CD8-positive, alpha-beta T cell (primary cell): ENCODE measurements at regions of chr22 and their contacts with region 1.

Region 1: GRCh38 chr22:30423982-30424963 is 1.3 kb upstream of the MTFP1 start:
- DNase-seq: peak; percentile 94 to 100 (median 98)
- ATAC-seq: peak; percentile 76
- H3K4me3 ChIP-seq: peak overlapping the region; percentile 64 to 69
- H3K4me3 Mint-ChIP-seq: peak overlapping the region; percentile 93
- H3K27ac ChIP-seq: peak overlapping the region; percentile 89 to 91
- H3K27ac Mint-ChIP-seq: peak overlapping the region; percentile 97
- H3K4me1 ChIP-seq: peaks cover 41% of the 10 kb centered on the region
- H3K4me1 Mint-ChIP-seq: peaks cover 63% of the 10 kb centered on the region
- H3K27me3 ChIP-seq: no peaks in the 10 kb centered on the region
- H3K27me3 Mint-ChIP-seq: no peaks in the 10 kb centered on the region
- CTCF ChIP-seq: no peak

Region 2: DNA sequence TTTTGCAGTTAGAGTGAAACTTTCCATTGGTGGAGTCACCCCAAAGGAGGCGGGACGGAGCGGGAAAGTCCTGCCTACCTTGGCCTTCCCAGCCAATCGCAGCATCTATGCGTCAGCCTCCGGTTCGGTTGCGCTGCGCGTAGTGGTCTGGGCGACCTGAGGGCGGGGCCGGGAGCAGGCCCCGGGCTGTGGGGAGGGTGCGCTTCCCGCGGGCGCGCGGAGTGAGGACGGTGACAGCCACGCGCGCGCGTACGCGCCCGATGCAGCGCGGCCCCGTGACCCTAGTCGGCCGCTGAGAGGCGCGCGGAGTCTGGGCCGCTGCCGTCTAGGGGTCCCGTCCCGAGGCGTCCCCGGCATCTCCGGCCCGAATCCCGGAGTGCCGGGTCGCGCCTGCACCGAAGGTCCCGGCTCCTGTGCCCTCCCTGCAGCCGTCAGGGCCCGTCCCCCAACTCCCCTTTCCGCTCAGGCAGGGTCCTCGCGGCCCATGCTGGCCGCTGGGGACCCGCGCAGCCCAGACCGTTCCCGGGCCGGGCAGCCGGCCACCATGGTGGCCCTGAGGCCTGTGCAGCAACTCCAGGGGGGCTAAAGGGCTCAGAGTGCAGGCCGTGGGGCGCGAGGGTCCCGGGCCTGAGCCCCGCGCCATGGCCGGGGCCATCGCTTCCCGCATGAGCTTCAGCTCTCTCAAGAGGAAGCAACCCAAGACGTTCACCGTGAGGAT is 820.8 kb before region 1 on chr22 and contains the start of gene NF2:
- CTCF ChIA-PET with region 1: no interaction called
- POLR2A ChIA-PET with region 1: no interaction called
- intact Hi-C with region 1: loop called in 1 of 2 experiments (anchors 5 kb)
- DNase-seq: peak; percentile 96 to 100 (median 98)
- ATAC-seq: peak; percentile 98
- H3K4me3 ChIP-seq: peak within 1 kb of the TSS; percentile 77 to 86
- H3K4me3 Mint-ChIP-seq: peak within 1 kb of the TSS; percentile 93
- H3K27ac ChIP-seq: peak within 1 kb of the TSS; percentile 84 to 90
- H3K27ac Mint-ChIP-seq: peak within 1 kb of the TSS; percentile 97
- H3K4me1 ChIP-seq: peaks cover 18% of the 10 kb centered on the region
- H3K4me1 Mint-ChIP-seq: peaks cover 25% of the 10 kb centered on the region
- H3K27me3 ChIP-seq: no peaks in the 10 kb centered on the region
- H3K27me3 Mint-ChIP-seq: no peaks in the 10 kb centered on the region
- CTCF ChIP-seq: no peak
- total RNA-seq, gene NF2: 22.6 to 23.2 TPM

Region 3: DNA sequence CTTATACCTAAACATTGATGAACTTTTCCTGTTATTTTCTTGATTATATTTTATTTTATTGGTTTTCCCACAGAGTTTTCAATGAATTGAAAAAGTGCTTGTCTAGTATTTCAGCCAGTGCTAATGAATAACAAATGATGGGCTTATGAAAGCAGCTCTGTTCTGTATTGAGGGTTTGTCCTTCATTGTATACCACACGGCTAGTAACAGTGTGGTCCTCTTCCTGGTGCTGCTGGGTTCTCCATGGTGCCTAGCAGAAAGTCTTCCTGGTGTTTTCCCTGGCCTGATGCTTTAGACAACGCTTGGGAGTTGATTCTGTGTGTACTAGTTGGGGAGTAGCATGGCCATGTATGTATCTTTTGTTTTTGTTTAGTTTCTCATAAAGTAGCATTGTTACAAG is 452.2 kb before region 1 on chr22:
- CTCF ChIA-PET with region 1: no interaction called
- POLR2A ChIA-PET with region 1: no interaction called
- intact Hi-C with region 1: no loop called
- DNase-seq: no peak
- ATAC-seq: no peak
- H3K4me3 ChIP-seq: no peak overlapping the region
- H3K4me3 Mint-ChIP-seq: no peak overlapping the region
- H3K27ac ChIP-seq: no peak overlapping the region
- H3K27ac Mint-ChIP-seq: no peak overlapping the region
- H3K4me1 ChIP-seq: no peaks in the 10 kb centered on the region
- H3K4me1 Mint-ChIP-seq: peaks cover 18% of the 10 kb centered on the region
- H3K27me3 ChIP-seq: no peaks in the 10 kb centered on the region
- H3K27me3 Mint-ChIP-seq: no peaks in the 10 kb centered on the region
- CTCF ChIP-seq: no peak

Region 4: DNA sequence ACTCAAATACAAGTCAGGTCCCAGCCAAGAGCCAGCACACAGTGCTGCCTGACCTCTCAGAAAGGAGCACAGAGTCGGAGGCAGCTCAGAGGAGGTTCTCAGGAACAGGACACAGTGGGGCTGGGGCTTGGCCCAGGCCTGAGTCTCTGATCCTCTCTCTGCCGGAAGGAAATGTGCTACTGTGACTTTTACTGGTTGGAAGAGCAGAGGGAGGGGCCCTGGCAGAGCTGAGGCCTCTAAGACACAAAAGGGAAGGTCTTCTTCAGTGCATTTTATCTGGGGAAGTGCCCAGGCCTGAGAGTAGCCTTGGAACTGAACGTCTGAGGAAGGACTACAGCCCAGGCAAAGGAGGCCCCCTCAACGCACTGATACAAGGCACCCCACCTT is 118.8 kb before region 1 on chr22:
- CTCF ChIA-PET with region 1: interaction called, 5 read pairs
- POLR2A ChIA-PET with region 1: interaction called, 4 read pairs
- intact Hi-C with region 1: loop called in 1 of 2 experiments (anchors 5 kb)
- DNase-seq: peak in 8 of 9 experiments; percentile 43 to 80 (median 56)
- ATAC-seq: peak; percentile 50
- H3K4me3 ChIP-seq: peak overlapping the region; percentile 36 to 38
- H3K4me3 Mint-ChIP-seq: peak overlapping the region; percentile 69
- H3K27ac ChIP-seq: peak overlapping the region; percentile 62 to 77
- H3K27ac Mint-ChIP-seq: peak overlapping the region; percentile 98
- H3K4me1 ChIP-seq: peaks cover 100% of the 10 kb centered on the region
- H3K4me1 Mint-ChIP-seq: peaks cover 97% of the 10 kb centered on the region
- H3K27me3 ChIP-seq: no peaks in the 10 kb centered on the region
- H3K27me3 Mint-ChIP-seq: no peaks in the 10 kb centered on the region
- CTCF ChIP-seq: no peak

Region 5: GRCh38 chr22:30348809-30349208 is 75.5 kb before region 1 on chr22:
- CTCF ChIA-PET with region 1: no interaction called
- POLR2A ChIA-PET with region 1: no interaction called
- intact Hi-C with region 1: no loop called
- DNase-seq: no peak
- ATAC-seq: no peak
- H3K4me3 ChIP-seq: no peak overlapping the region
- H3K4me3 Mint-ChIP-seq: no peak overlapping the region
- H3K27ac ChIP-seq: no peak overlapping the region
- H3K27ac Mint-ChIP-seq: peak overlapping the region; percentile 23
- H3K4me1 ChIP-seq: peaks cover 42% of the 10 kb centered on the region
- H3K4me1 Mint-ChIP-seq: peaks cover 52% of the 10 kb centered on the region
- H3K27me3 ChIP-seq: no peaks in the 10 kb centered on the region
- H3K27me3 Mint-ChIP-seq: no peaks in the 10 kb centered on the region
- CTCF ChIP-seq: no peak

Region 6: DNA sequence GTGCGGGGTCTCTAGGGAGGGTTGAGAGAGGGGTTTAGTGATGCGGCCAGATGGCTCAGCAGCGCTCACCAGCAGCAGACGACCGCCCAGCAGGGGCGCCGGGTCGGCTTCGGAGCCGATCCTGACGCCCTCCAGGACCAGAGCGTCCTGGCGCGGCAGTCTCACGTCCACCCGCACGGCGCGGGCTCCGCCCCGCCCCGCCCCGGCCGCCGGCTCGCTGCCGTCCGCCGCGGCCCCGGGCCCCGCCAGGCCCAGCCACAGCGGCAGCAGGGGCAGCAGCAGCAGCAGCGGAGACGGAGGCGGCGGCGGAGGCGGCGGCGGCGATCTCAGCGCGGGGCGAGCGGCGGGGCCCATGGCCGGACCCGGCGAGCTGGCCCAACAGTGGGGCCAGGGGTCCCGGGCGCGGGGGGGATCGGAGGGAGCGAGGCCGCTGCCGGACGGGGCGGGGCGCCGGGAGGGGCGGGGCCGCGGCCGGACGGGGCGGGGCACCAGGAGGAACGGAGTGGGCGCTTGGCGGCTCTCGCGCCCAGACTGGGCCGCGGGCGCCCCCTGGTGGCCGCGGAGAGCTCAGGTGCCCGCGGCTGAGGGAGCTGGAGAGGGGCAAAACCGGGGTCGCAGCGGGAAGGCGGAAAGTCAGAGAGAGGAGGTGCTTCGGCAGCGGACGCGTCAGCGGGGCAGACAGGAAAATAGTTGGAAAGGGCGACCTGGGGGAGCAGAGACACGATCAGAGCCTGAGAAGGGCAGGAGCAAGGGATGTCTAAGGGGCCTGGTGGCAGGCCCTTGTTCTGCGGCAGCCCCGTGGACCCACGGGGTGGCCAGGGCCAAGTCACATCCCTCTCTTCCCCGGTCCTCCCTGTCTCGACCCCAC is 37.1 kb before region 1 on chr22 and contains the start of gene RNF215:
- CTCF ChIA-PET with region 1: interaction called, 210 read pairs
- POLR2A ChIA-PET with region 1: interaction called, 5 read pairs
- intact Hi-C with region 1: loop called (anchors 1 kb)
- DNase-seq: peak; percentile 60 to 91 (median 75)
- ATAC-seq: peak; percentile 79
- H3K4me3 ChIP-seq: peak within 1 kb of the TSS; percentile 33 to 40
- H3K4me3 Mint-ChIP-seq: peak within 1 kb of the TSS; percentile 85
- H3K27ac ChIP-seq: no peak within 1 kb of the TSS
- H3K27ac Mint-ChIP-seq: peak within 1 kb of the TSS; percentile 82
- H3K4me1 ChIP-seq: peaks cover 16% of the 10 kb centered on the region
- H3K4me1 Mint-ChIP-seq: peaks cover 26% of the 10 kb centered on the region
- H3K27me3 ChIP-seq: peaks cover 0 to 2% of the 10 kb centered on the region in 2 experiments
- H3K27me3 Mint-ChIP-seq: no peaks in the 10 kb centered on the region
- CTCF ChIP-seq: peak; percentile 87
- total RNA-seq, gene RNF215: 7.0 to 7.4 TPM

Region 7: DNA sequence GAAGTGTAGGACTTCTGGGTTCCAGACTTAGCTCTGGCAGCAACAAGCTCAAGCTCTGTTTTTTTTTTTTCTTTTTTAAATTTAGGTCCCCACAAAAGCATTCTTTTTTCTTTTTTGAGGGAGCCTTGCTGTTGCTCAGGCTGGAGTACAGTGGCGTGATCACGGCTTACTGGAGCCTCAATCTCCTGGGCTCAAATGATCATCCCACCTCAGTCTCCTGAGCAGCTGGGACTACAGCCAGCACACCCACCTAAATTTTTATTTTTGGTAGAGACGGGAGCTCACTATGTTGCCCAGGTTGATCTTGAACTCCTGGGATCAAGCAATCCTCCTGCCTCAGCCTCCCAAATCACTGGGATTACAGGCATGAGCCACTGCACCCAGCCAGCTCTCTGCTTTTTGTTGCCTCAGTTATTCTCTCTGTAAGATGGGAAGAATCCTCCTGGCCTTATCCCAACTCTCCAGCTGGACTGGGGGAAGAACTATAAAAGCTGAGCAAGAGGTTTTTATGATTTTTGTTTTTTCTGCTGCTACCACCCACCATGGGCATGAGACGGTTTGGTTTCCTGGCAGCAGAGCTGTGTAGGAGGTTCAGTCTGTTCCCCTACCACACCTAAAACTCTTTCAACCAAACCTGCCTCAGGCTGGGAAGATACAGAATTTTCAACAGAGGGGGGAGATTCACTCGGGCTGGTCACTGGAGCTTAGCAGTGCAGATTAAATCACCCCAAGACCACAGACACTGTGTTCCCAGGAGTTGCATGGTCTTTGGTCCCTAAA is 10.3 kb before region 1 on chr22:
- CTCF ChIA-PET with region 1: interaction called, 39 read pairs
- POLR2A ChIA-PET with region 1: interaction called, 44 read pairs
- intact Hi-C with region 1: loop called in 1 of 2 experiments (anchors 1 kb)
- DNase-seq: peak in 1 of 9 experiments; percentile 19
- ATAC-seq: peak; percentile 58
- H3K4me3 ChIP-seq: peak overlapping the region in 1 of 2 experiments; percentile 4
- H3K4me3 Mint-ChIP-seq: peak overlapping the region; percentile 38
- H3K27ac ChIP-seq: peak overlapping the region; percentile 9 to 36
- H3K27ac Mint-ChIP-seq: peak overlapping the region; percentile 88
- H3K4me1 ChIP-seq: peaks cover 38% of the 10 kb centered on the region
- H3K4me1 Mint-ChIP-seq: peaks cover 41% of the 10 kb centered on the region
- H3K27me3 ChIP-seq: no peaks in the 10 kb centered on the region
- H3K27me3 Mint-ChIP-seq: no peaks in the 10 kb centered on the region
- CTCF ChIP-seq: no peak

Region 8: DNA sequence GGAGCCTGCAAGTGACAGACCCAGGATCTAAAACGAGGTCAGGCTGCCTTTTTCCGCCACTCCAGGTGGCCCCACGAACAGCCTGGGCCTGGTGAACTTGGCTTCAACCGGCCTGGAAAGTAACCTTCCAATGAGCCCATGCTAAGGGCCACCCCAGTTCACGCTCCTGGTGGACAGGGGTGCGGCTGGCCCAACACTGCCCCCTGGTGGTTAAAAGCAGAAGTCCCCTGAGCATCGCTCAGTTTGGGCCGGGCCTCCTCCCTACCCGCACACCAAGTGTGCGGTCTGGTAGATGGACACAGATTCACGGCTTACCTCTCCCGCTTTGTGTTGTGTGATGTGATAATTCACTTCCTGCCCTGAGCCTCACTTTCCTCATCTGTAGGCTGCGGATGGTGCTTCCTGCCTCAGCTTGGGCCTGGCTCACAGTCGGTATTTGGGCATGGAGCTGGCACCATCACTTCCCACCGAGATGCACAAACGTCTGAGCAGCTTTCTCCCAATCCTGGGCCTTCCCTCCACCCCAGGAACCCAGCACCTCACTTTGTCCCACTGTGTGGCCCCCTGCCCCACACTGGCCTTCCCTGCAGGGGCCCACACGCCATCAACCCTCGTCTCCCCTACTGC is 61.2 kb after region 1 on chr22:
- CTCF ChIA-PET with region 1: interaction called, 10 read pairs
- POLR2A ChIA-PET with region 1: no interaction called
- intact Hi-C with region 1: loop called in 1 of 2 experiments (anchors 2 kb)
- DNase-seq: peak; percentile 60 to 85 (median 75)
- ATAC-seq: peak; percentile 98
- H3K4me3 ChIP-seq: no peak overlapping the region
- H3K4me3 Mint-ChIP-seq: no peak overlapping the region
- H3K27ac ChIP-seq: no peak overlapping the region
- H3K27ac Mint-ChIP-seq: no peak overlapping the region
- H3K4me1 ChIP-seq: no peaks in the 10 kb centered on the region
- H3K4me1 Mint-ChIP-seq: no peaks in the 10 kb centered on the region
- H3K27me3 ChIP-seq: no peaks in the 10 kb centered on the region
- H3K27me3 Mint-ChIP-seq: peaks cover 2% of the 10 kb centered on the region
- CTCF ChIP-seq: peak; percentile 95